Common myeloid progenitor, CD34-positive (primary cell): ENCODE measurements at regions of chr5 and their contacts with region 1.

Region 1: DNA sequence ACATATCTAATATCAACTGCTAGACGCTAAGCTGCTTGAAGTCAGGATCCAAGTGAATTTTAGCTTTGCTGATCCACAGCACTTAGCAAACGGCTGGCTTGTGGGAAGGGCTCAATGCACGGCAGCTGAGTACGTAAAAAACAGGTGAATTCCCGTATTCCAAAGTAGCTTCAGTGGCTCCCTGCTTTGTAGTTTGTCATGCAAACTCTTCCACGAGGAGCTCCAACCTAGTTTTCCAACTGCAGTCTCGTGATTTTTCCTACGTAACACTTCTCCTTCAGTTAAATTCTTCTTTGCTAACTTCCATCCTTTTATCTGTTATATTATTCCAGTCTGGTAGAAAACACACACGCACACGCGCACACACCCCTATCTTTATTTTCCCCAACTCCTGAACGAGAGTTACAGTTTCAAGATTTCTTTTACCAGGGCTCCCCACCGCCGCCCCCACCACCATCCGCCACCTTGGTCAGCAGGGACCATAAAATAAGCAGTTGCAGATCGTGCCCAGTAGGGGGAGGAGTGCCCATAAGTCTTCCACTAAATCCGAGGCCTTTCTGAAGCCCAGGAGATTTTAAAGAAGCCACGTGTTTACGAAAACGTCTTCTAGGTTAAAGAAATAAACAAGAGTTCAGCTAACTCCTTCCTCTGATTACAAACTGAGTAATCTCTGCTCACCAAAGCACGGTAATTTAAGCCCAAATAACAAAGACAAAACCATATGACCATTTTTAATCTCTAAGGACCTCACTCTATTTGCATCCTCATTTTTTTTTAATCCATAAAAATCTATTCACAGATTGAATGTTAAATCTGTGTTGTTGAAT is 34.8 kb upstream of the TRIO start:
- DNase-seq: peak; percentile 78 to 89 (median 87)
- H3K4me3 ChIP-seq: peak overlapping the region in 3 of 7 experiments; percentile 11 to 53 (median 50)
- H3K27ac ChIP-seq: no peak overlapping the region
- H3K4me1 ChIP-seq: peaks cover 3 to 8% (median 4%) of the 10 kb centered on the region in 4 experiments
- H3K27me3 ChIP-seq: peaks cover 0 to 2% (median 0%) of the 10 kb centered on the region in 5 experiments

Region 2: GRCh38 chr5:14086261-14086660 is 22.1 kb before region 1 on chr5:
- CTCF ChIA-PET with region 1: no interaction called
- POLR2A ChIA-PET with region 1: no interaction called
- DNase-seq: no peak
- H3K4me3 ChIP-seq: no peak overlapping the region
- H3K27ac ChIP-seq: no peak overlapping the region
- H3K4me1 ChIP-seq: no peaks in the 10 kb centered on the region
- H3K27me3 ChIP-seq: peaks cover 0 to 4% (median 0%) of the 10 kb centered on the region in 5 experiments

Region 3: DNA sequence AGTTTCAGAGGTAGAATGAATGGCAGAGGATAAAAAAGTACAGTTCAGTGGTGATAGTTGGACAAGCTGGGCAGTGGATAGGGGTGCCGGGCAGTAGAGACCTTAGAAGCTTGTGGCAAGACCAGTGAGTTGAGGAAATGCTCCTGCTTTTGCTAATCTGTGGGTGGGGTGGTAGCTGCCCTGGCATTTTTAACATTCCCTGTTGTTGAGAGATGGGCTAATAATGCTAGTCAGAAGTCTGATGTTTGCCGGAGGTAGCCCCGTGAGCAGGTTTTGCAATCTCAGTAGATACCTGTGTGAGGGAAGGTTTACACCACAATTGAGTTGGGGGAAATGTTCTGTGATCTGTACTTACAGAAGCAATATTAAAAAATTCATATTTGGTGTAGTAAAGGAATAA is 125.8 kb after region 1 on chr5:
- CTCF ChIA-PET with region 1: no interaction called
- POLR2A ChIA-PET with region 1: no interaction called
- DNase-seq: no peak
- H3K4me3 ChIP-seq: no peak overlapping the region
- H3K27ac ChIP-seq: no peak overlapping the region
- H3K4me1 ChIP-seq: peaks cover 0 to 14% (median 11%) of the 10 kb centered on the region in 4 experiments
- H3K27me3 ChIP-seq: no peaks in the 10 kb centered on the region

Region 4: DNA sequence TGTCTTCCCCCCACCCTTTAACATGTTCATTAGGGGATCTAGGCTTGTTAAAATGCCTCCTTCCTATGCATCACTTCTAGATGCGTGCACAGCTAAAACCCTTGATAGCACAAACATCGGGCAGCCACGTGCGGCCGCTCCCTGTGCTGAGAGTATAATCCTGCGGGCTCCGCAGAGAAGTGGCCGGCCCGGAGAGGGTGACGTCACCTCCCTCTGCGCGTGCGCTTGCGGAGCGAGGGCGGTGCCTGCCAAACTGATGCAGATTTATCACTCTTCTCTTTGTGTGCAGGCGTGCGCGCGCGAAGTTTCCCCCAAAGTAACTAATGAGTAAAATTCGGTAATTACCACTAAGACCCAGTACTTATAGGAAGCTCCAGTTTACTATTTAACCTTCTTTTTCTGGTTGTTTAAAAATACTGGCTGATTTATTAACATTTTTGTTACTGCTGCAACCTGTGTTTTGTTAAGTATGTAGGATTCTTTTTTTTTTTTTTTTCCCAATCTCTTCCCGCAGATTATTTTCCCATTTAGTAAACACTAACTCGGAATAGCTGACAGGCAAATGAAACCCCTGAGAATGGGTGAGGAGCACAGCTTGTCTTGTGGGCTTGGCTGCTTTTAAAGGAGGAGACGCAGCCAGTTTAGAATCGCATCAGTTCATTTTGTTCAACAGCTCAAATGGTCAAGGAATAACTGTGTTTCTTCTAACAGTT is 156.4 kb after region 1 on chr5:
- CTCF ChIA-PET with region 1: interaction called, 57 read pairs
- POLR2A ChIA-PET with region 1: no interaction called
- DNase-seq: peak; percentile 88 to 93 (median 93)
- H3K4me3 ChIP-seq: peak overlapping the region in 5 of 7 experiments; percentile 4 to 74 (median 43)
- H3K27ac ChIP-seq: no peak overlapping the region
- H3K4me1 ChIP-seq: peaks cover 0 to 65% (median 31%) of the 10 kb centered on the region in 4 experiments
- H3K27me3 ChIP-seq: no peaks in the 10 kb centered on the region

Region 5: DNA sequence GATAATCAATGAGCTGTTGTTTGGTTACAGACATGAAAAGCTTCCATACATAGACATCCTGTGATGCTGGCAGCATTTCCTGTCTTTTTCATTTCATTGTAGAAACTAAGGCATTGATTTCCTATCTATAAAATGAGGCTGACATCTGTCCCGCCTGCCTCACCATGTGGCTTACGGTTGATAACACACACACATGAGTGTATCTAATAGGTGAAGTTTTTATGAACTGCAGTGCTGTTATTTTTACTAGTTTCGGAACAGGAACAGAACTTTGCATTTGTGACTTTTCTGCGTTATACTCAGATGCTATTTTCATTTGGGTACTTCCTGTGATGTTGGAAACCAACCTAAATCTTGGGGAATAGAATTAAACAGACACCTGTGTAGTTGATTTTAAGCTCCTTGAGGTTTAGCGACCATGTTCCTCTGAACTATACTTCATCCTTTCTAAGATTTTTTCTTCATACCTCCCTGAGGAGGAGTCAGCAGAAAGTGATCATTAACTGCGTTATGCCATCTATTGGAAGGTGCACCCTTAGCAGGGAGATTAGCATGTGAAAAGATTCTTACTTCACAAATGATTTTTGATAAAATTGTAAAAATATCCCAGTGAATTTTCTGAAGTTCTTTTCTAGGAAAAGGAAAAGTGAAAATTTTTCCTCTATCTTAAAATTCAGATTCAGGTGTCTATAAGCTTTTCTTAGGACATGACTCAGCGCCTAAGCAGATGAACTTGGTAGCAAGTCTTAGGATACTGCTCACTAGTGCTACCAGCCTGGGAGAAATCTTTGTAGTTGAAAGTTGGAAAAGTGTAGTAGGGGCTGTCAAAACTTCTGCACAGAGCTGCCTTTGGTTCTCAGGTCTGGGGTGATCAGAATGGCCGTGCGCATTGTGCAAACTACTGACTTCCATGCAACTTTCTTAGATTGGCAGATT is 169.3 kb after region 1 on chr5:
- CTCF ChIA-PET with region 1: interaction called, 57 read pairs
- POLR2A ChIA-PET with region 1: no interaction called
- DNase-seq: peak in 1 of 3 donors; percentile 35
- H3K4me3 ChIP-seq: no peak overlapping the region
- H3K27ac ChIP-seq: no peak overlapping the region
- H3K4me1 ChIP-seq: peaks cover 0 to 5% (median 0%) of the 10 kb centered on the region in 4 experiments
- H3K27me3 ChIP-seq: no peaks in the 10 kb centered on the region